Breast epithelium (tissue), 4 donors: ENCODE measurements at regions of chr10 and their contacts with region 1.

Region 1: GRCh38 chr10:16581202-16581601 is 59.5 kb upstream of the C1QL3 start:
- DNase-seq: no peak
- H3K4me3 ChIP-seq: no peak overlapping the region
- H3K27ac ChIP-seq: no peak overlapping the region
- H3K4me1 ChIP-seq: no peaks in the 10 kb centered on the region
- H3K27me3 ChIP-seq: no peaks in the 10 kb centered on the region
- CTCF ChIP-seq: no peak
- POLR2A ChIP-seq: no peak

Region 2: GRCh38 chr10:16601881-16602775 is 20.9 kb after region 1 on chr10:
- intact Hi-C with region 1: loop called (anchors 1 kb)
- DNase-seq: no peak
- H3K4me3 ChIP-seq: no peak overlapping the region
- H3K27ac ChIP-seq: no peak overlapping the region
- H3K4me1 ChIP-seq: no peaks in the 10 kb centered on the region
- H3K27me3 ChIP-seq: no peaks in the 10 kb centered on the region
- CTCF ChIP-seq: no peak
- POLR2A ChIP-seq: no peak